Cardiac septum (tissue), 1 donor: ENCODE measurements at regions of chr10 and their contacts with region 1.

Region 1: DNA sequence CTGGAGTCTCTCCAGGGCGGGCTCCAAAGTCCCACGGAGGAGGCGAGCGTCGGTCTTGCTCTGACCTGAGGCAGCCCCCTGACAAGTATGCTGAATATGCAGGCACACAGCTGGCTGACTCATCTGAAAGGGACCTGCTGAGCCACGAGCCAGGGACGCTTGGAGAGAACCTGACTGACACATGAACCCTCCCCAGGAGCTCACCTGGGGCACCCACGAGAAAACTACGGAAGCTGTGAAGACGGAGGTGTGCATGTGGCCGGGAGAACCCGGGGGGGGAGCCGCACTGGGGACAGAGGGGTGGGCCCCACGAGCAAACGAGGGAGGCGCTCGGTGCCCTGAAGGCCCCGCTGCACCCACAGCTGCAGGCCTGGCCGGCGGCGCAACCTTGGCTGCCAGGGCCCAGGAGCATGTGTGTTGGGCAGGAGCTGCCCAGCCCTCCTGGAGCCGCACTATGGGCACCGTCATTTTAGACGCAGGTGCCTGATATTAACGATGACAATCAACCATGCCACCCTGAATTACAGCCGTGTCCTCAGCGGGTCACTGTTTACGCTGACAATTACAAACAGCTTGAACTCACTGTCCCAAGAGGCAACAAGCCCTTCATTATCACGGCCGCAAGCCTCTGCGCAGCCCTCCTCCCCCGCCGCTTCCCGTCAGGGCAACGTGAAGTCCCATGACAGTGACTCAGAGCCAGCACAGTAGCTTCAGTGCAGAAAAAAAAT is 64.7 kb downstream of the DIP2C start:
- DNase-seq: peak; percentile 88

Region 2: GRCh38 chr10:593901-594457 is 30.8 kb before region 1 on chr10:
- intact Hi-C with region 1: loop called (anchors 1 kb)
- DNase-seq: no peak

Region 3: GRCh38 chr10:642186-642877 is 17.6 kb after region 1 on chr10:
- intact Hi-C with region 1: no loop called
- DNase-seq: peak; percentile 56

Region 4: GRCh38 chr10:689433-690371 is 64.9 kb after region 1 on chr10 and contains the start of gene DIP2C:
- intact Hi-C with region 1: loop called (anchors 5 kb)
- DNase-seq: no peak
- total RNA-seq, gene DIP2C: 28.8 TPM